Activated CD4-positive, alpha-beta T cell treated with anti-CD3 and anti-CD28 coated beads for 36 hours (primary cell): ENCODE measurements at regions of chr1 and their contacts with region 1.

Region 1: DNA sequence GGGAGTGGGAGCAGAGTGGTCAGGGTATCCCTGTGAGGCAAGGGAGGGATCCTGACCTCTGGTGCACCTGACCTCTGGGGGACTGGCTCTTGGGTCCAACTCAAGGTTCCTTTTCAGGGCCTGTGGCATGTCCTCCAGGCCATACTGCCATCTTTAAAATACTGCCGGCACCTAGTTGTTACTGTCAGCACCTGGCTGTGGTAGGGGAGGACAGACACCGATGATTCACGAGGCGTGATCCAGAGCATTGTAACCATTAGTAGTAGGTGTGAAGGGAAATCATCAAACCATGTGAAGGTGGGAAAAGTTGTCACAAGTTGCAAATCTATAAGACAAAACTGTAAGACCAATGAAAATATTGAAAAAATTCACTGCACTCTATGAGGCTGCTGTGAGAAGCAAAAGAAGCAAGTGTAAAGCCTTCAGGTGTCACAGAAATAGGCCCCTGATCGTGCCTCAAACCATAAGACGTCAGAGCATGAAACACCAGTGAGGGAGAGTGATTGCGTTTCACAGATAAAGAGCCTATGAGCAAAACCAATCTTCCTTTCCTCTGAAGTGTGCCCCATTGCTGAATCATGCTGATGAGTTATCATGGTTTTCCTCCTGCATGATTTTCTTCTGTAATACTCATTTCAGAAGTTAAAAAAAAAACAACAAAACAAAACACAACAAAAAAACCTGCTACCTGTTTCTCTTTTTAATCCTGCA is 55.3 kb downstream of the CDC7 start:
- DNase-seq: peak; percentile 78
- ATAC-seq: peak; percentile 88
- H3K4me3 Mint-ChIP-seq: peak overlapping the region; percentile 60
- H3K27ac Mint-ChIP-seq: peak overlapping the region; percentile 97
- H3K4me1 Mint-ChIP-seq: peaks cover 83% of the 10 kb centered on the region
- H3K27me3 Mint-ChIP-seq: no peaks in the 10 kb centered on the region

Region 2: GRCh38 chr1:90544356-90544755 is 1011.6 kb before region 1 on chr1:
- CTCF ChIA-PET with region 1: no interaction called
- POLR2A ChIA-PET with region 1: no interaction called
- intact Hi-C with region 1: no loop called
- DNase-seq: no peak
- ATAC-seq: no peak
- H3K4me3 Mint-ChIP-seq: no peak overlapping the region
- H3K27ac Mint-ChIP-seq: no peak overlapping the region
- H3K4me1 Mint-ChIP-seq: no peaks in the 10 kb centered on the region
- H3K27me3 Mint-ChIP-seq: peaks cover 11% of the 10 kb centered on the region

Region 3: DNA sequence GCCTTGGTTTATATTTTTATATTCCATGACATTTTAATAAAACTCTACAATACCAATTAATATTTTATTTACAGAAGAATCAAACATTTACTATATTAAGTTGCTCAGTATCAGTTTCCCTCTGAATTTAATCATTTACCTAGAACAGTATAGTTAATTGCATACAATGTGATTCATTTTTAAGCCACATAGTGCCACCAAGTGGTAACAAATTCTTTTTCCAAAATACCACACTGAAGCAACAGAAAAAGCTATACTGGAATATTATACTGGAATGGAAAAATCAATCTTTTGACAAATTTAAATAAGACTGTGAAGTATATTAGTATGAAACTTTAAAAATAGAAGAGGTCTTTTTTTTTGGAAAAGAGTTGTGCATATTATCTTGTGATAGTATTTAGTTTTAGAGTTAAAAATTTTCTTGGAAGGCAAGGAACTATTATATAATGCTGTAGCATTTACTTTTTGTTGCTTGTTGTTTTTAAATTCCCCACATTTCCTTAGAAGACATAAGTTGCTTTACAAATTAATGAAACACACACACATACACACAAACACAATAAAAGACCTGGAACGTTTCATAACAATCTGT is 591.4 kb before region 1 on chr1:
- CTCF ChIA-PET with region 1: no interaction called
- POLR2A ChIA-PET with region 1: no interaction called
- intact Hi-C with region 1: no loop called
- DNase-seq: no peak
- ATAC-seq: no peak
- H3K4me3 Mint-ChIP-seq: no peak overlapping the region
- H3K27ac Mint-ChIP-seq: no peak overlapping the region
- H3K4me1 Mint-ChIP-seq: peaks cover 38% of the 10 kb centered on the region
- H3K27me3 Mint-ChIP-seq: no peaks in the 10 kb centered on the region

Region 4: DNA sequence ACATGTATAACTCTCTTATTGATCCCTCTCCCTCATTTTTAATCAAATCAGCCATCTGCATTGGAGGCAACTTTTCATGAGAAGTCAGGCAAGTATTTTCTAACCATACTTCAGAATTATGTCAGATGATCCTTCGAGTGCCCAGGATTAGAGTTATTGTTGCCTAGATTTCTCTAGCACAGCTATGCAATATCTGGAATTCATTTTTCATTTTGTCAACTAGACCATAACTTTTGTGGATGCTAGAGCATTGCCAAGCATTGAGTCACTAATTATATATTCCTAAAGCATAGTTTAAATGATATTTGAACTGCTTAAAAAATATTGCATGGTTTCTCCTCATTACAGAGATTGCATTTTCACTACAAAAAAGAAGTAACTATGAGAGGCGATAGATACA is 172.5 kb before region 1 on chr1:
- CTCF ChIA-PET with region 1: no interaction called
- POLR2A ChIA-PET with region 1: no interaction called
- intact Hi-C with region 1: no loop called
- DNase-seq: no peak
- ATAC-seq: no peak
- H3K4me3 Mint-ChIP-seq: no peak overlapping the region
- H3K27ac Mint-ChIP-seq: no peak overlapping the region
- H3K4me1 Mint-ChIP-seq: no peaks in the 10 kb centered on the region
- H3K27me3 Mint-ChIP-seq: peaks cover 6% of the 10 kb centered on the region

Region 5: DNA sequence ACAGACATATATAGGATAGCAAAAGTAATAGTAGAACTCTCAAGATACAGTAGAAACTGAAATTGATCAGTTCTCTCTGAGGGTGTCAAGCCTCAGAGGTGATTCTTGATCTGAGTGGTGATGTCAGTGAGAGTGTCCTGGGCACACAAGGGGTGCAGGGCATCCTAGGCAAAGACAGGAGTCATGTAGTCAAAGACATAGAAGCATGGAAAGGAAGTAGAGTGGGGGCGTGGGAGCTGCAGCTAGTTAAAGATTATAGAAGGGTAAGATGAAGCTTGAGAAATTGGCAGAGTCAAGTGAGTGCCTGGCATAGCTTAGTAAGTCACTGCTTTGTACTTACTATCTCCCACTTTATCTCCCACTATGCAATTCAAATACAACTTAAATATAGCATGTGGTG is 32.5 kb before region 1 on chr1:
- CTCF ChIA-PET with region 1: no interaction called
- POLR2A ChIA-PET with region 1: no interaction called
- intact Hi-C with region 1: loop called (anchors 2 to 5 kb)
- DNase-seq: peak; percentile 66
- ATAC-seq: peak; percentile 97
- H3K4me3 Mint-ChIP-seq: no peak overlapping the region
- H3K27ac Mint-ChIP-seq: peak overlapping the region; percentile 1
- H3K4me1 Mint-ChIP-seq: peaks cover 29% of the 10 kb centered on the region
- H3K27me3 Mint-ChIP-seq: no peaks in the 10 kb centered on the region

Region 6: GRCh38 chr1:91712981-91713841 is 157.2 kb after region 1 on chr1:
- CTCF ChIA-PET with region 1: interaction called, 3 read pairs
- POLR2A ChIA-PET with region 1: no interaction called
- intact Hi-C with region 1: loop called (anchors 1 kb)
- DNase-seq: peak; percentile 75
- ATAC-seq: peak; percentile 91
- H3K4me3 Mint-ChIP-seq: peak overlapping the region; percentile 6
- H3K27ac Mint-ChIP-seq: peak overlapping the region; percentile 72
- H3K4me1 Mint-ChIP-seq: peaks cover 30% of the 10 kb centered on the region
- H3K27me3 Mint-ChIP-seq: no peaks in the 10 kb centered on the region

Region 7: DNA sequence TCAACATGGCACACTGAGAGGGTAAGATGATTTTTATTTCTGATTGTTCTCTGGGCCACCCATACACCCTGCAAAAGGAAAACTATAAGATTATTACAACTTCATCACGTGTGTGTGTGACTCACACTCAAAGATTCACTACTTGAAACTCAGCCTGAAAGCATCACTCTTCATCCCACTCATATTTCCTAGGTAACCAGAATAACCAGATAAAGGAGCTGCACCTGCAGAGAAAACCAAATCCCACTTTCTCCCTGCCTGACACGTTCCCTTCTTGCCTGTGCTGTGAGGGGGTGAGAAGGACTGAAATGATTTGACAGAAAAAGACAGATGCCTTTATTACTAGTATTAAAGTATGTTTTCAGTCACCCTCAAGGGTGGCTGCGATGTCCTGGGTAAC is 198.4 kb after region 1 on chr1:
- CTCF ChIA-PET with region 1: interaction called, 4 read pairs
- POLR2A ChIA-PET with region 1: no interaction called
- intact Hi-C with region 1: loop called (anchors 1 kb)
- DNase-seq: peak; percentile 75
- ATAC-seq: peak; percentile 87
- H3K4me3 Mint-ChIP-seq: peak overlapping the region; percentile 21
- H3K27ac Mint-ChIP-seq: peak overlapping the region; percentile 82
- H3K4me1 Mint-ChIP-seq: peaks cover 43% of the 10 kb centered on the region
- H3K27me3 Mint-ChIP-seq: peaks cover 7% of the 10 kb centered on the region

Region 8: DNA sequence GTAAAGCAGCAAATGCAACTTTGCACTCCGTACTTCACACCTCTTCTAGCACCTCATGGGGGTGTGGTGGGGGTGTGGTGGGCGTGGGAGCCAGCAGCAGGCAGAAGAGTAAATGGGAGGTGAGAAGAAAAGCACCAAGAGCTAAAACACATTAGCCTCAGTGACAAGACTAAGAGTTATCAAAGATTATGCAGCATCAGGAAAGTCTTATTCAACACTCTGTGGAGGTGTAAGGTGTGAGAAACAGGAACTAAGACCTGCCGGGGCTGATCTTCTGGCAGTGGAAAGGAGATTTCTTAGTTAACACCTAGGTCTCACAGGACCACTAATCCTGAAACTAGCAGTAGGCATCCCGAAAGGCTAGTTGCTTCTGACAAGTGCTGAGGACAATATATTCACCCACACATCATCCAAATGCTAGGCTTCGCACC is 320.1 kb after region 1 on chr1:
- CTCF ChIA-PET with region 1: interaction called, 3 read pairs
- POLR2A ChIA-PET with region 1: no interaction called
- intact Hi-C with region 1: loop called (anchors 1 kb)
- DNase-seq: peak; percentile 68
- ATAC-seq: peak; percentile 83
- H3K4me3 Mint-ChIP-seq: no peak overlapping the region
- H3K27ac Mint-ChIP-seq: peak overlapping the region; percentile 29
- H3K4me1 Mint-ChIP-seq: peaks cover 79% of the 10 kb centered on the region
- H3K27me3 Mint-ChIP-seq: no peaks in the 10 kb centered on the region

Region 9: DNA sequence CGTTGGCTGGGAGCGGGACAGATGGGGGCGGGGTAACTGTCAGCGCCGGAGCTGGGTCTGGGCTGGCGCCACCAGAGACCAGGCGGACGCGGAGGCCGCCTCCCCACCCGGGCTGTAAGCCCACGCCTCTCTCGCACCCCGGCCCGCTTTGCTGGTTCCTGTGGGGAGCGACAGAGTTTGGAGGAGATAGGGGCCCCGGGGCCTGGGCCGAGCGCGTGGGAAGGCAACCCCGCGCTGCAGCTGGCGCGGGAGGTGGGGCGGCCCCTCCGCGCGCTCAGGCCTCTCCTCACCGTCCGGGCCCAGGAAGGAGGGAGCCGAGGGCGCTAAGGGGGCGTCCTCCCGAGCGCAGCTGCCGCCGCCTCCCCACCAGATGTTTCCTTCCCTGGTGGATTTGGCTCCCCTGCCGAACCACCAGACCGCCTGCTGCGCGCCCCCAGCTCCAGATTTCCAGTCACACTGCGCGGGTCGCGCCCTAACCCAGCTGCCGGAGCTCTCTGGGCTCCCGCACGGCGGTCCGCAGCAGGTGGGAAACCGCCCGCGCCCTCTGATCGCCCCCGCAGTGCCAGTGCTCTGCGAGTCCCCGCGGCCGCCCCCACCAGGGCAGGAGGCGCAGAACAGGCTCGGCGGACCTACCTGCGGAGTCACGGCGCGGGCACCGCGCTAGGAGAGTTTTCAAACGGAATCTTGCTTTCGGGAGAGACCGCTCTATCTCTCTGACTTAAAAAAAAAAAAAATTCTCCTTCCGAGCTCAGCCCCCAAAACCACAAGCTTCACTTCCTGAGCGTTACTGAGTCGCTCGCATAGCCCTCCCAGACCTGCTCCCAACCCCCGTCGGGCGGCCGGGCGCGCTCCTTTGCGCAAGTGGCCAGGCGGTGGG is 929.6 kb after region 1 on chr1:
- CTCF ChIA-PET with region 1: no interaction called
- POLR2A ChIA-PET with region 1: no interaction called
- intact Hi-C with region 1: loop called in 1 of 2 experiments (anchors 10 kb)
- DNase-seq: peak; percentile 95
- ATAC-seq: peak; percentile 58
- H3K4me3 Mint-ChIP-seq: peak overlapping the region; percentile 98
- H3K27ac Mint-ChIP-seq: peak overlapping the region; percentile 97
- H3K4me1 Mint-ChIP-seq: peaks cover 30% of the 10 kb centered on the region
- H3K27me3 Mint-ChIP-seq: no peaks in the 10 kb centered on the region